Dendritic cell treated with granulocyte-macrophage colony-stimulating factor and Interleukin-4, amounts not matched to agents 40 ng/mL and 50 ng/mL, for 4 days (primary cell): ENCODE measurements at regions of chr14 and their contacts with region 1.

Region 1: DNA sequence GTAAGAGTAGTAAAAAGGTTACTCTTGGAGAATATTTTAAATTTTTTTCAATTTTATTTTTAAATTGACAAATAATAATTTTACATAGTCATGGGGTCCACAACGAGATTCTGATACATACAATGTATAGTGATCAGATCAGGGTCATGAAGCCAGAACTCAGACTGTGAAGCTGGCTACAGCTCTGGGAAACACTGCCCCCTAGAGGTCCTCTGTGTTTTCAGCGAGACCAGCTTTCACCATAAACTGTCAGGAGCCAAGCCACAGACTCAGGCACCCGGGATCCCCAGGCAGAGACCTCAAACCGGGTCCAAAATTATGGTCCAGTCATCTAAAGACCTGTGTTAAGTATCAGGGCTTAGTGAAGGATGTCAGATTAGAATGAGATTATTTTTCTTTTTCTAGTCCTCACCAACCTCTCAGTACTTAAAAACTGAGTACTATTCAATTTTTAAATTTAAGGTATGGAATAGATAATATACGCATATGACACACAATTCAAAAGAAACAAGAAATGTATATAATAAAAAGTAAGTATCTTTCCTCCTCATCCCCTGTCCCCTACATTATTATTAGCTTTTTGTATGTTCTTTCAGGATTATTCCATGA is 397.1 kb downstream of the MDGA2 start:
- H3K4me3 Mint-ChIP-seq: no peak overlapping the region
- H3K27ac Mint-ChIP-seq: no peak overlapping the region
- H3K4me1 Mint-ChIP-seq: peaks cover 4% of the 10 kb centered on the region
- H3K27me3 Mint-ChIP-seq: no peaks in the 10 kb centered on the region

Region 2: DNA sequence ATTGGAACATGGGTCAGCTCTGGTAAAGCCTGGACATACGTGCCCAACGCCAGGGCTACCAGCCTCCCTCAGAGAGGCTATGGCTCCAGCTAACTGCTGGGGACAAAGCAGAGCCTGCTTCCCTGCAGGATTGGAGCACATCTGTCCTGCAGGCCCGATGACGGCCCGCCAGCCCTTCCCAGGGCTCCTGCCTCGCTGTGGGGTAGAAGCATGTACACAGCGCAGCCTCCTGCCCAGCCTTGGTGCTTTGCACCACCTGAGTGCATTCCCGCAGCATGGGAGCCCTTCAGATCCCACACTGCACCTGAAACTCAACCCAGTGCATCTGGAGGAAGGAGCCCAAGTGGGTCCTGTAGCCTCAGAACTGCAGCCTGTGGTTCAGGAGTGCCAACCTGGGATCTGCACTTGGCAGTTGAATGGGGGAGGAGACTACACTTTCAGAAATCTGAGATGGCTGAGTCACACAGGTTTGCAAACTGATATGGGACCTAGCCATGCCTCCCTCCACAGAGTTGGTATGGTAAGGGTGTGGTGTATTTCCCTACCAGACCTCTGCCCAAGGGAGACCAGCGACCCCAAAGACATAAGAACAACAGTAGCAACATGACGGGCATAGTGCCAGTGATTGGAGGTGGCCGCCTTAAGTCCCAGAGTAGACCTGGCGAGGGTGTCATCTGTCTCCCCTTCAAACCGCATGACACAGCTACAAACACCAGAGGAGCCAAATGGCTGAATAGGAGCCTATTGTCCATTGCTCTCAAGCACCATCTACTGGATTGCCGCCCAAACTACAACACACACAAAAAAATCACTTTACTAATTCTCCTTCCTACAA is 1751.4 kb before region 1 on chr14:
- intact Hi-C with region 1: no loop called
- H3K4me3 Mint-ChIP-seq: no peak overlapping the region
- H3K27ac Mint-ChIP-seq: no peak overlapping the region
- H3K4me1 Mint-ChIP-seq: no peaks in the 10 kb centered on the region
- H3K27me3 Mint-ChIP-seq: no peaks in the 10 kb centered on the region

Region 3: GRCh38 chr14:46581036-46581671 is 697.2 kb before region 1 on chr14:
- intact Hi-C with region 1: loop called (anchors 5 kb)
- H3K4me3 Mint-ChIP-seq: no peak overlapping the region
- H3K27ac Mint-ChIP-seq: no peak overlapping the region
- H3K4me1 Mint-ChIP-seq: no peaks in the 10 kb centered on the region
- H3K27me3 Mint-ChIP-seq: no peaks in the 10 kb centered on the region

Region 4: GRCh38 chr14:47149326-47149725 is 129.0 kb before region 1 on chr14:
- intact Hi-C with region 1: no loop called
- H3K4me3 Mint-ChIP-seq: no peak overlapping the region
- H3K27ac Mint-ChIP-seq: no peak overlapping the region
- H3K4me1 Mint-ChIP-seq: no peaks in the 10 kb centered on the region
- H3K27me3 Mint-ChIP-seq: no peaks in the 10 kb centered on the region

Region 5: GRCh38 chr14:47500369-47500768 is 222.0 kb after region 1 on chr14:
- intact Hi-C with region 1: no loop called
- H3K4me3 Mint-ChIP-seq: no peak overlapping the region
- H3K27ac Mint-ChIP-seq: no peak overlapping the region
- H3K4me1 Mint-ChIP-seq: no peaks in the 10 kb centered on the region
- H3K27me3 Mint-ChIP-seq: no peaks in the 10 kb centered on the region